Naive thymus-derived CD8-positive, alpha-beta T cell (primary cell): ENCODE measurements at regions of chr11 and their contacts with region 1.

Region 1: GRCh38 chr11:112074026-112074811 is at the start of gene NKAPD1:
- DNase-seq: peak; percentile 55 to 94 (median 84)
- ATAC-seq: peak; percentile 81 to 86
- H3K4me3 Mint-ChIP-seq: peak within 1 kb of the TSS; percentile 84 to 97 (median 95)
- H3K27ac Mint-ChIP-seq: peak within 1 kb of the TSS; percentile 93 to 98 (median 96)
- H3K4me1 Mint-ChIP-seq: peaks cover 19 to 40% (median 32%) of the 10 kb centered on the region in 4 donors
- H3K27me3 Mint-ChIP-seq: peaks cover 0 to 8% (median 2%) of the 10 kb centered on the region in 5 donors
- polyA plus RNA-seq, gene NKAPD1: 9.8 to 12.6 (median 10.0) TPM

Region 2: GRCh38 chr11:112086422-112087191 is 12.4 kb after region 1 on chr11 and contains the starts of genes SDHD and TIMM8B:
- POLR2A ChIA-PET with region 1: interaction called, 11 read pairs
- DNase-seq: peak; percentile 93 to 98 (median 96)
- ATAC-seq: peak; percentile 92 to 94
- H3K4me3 Mint-ChIP-seq: peak within 1 kb of the TSS; percentile 93 to 100 (median 99)
- H3K27ac Mint-ChIP-seq: peak within 1 kb of the TSS; percentile 97 to 99 (median 99)
- H3K4me1 Mint-ChIP-seq: peaks cover 47 to 58% (median 52%) of the 10 kb centered on the region in 4 donors
- H3K27me3 Mint-ChIP-seq: peaks cover 0 to 3% (median 0%) of the 10 kb centered on the region in 5 donors
- polyA plus RNA-seq, gene SDHD: 167 to 191 (median 181) TPM
- polyA plus RNA-seq, gene TIMM8B: 58.0 to 75.2 (median 69.1) TPM

Region 3: GRCh38 chr11:112100462-112100861 is 26.2 kb after region 1 on chr11:
- POLR2A ChIA-PET with region 1: no interaction called
- DNase-seq: no peak
- ATAC-seq: no peak
- H3K4me3 Mint-ChIP-seq: no peak overlapping the region
- H3K27ac Mint-ChIP-seq: peak overlapping the region in 1 of 10 donors; percentile 22
- H3K4me1 Mint-ChIP-seq: peaks cover 0 to 7% (median 0%) of the 10 kb centered on the region in 4 donors
- H3K27me3 Mint-ChIP-seq: no peaks in the 10 kb centered on the region

Region 4: GRCh38 chr11:112241486-112241885 is 167.3 kb after region 1 on chr11:
- POLR2A ChIA-PET with region 1: no interaction called
- DNase-seq: no peak
- ATAC-seq: no peak
- H3K4me3 Mint-ChIP-seq: no peak overlapping the region
- H3K27ac Mint-ChIP-seq: no peak overlapping the region
- H3K4me1 Mint-ChIP-seq: peaks cover 0 to 3% (median under 1%) of the 10 kb centered on the region in 4 donors
- H3K27me3 Mint-ChIP-seq: no peaks in the 10 kb centered on the region